GM23248 (cell line): ENCODE measurements at regions of chr10 and their contacts with region 1.

Region 1: GRCh38 chr10:125719146-125720001 is at the start of gene EDRF1:
- DNase-seq: peak; percentile 100
- H3K4me3 ChIP-seq: peak within 1 kb of the TSS; percentile 99
- H3K27ac ChIP-seq: peak within 1 kb of the TSS; percentile 87
- H3K4me1 ChIP-seq: peaks cover 16% of the 10 kb centered on the region
- H3K27me3 ChIP-seq: no peaks in the 10 kb centered on the region
- total RNA-seq, gene EDRF1: 13.2 and 16.4 TPM in 2 replicates

Region 2: GRCh38 chr10:125048101-125048864 is 671.1 kb before region 1 on chr10:
- in situ Hi-C with region 1: loop called (anchors 25 kb)
- DNase-seq: peak; percentile 89
- H3K4me3 ChIP-seq: no peak overlapping the region
- H3K27ac ChIP-seq: no peak overlapping the region
- H3K4me1 ChIP-seq: peaks cover 36% of the 10 kb centered on the region
- H3K27me3 ChIP-seq: no peaks in the 10 kb centered on the region

Region 3: GRCh38 chr10:125859128-125859817 is 139.9 kb after region 1 on chr10:
- in situ Hi-C with region 1: no loop called
- DNase-seq: no peak
- H3K4me3 ChIP-seq: no peak overlapping the region
- H3K27ac ChIP-seq: no peak overlapping the region
- H3K4me1 ChIP-seq: no peaks in the 10 kb centered on the region
- H3K27me3 ChIP-seq: no peaks in the 10 kb centered on the region

Region 4: DNA sequence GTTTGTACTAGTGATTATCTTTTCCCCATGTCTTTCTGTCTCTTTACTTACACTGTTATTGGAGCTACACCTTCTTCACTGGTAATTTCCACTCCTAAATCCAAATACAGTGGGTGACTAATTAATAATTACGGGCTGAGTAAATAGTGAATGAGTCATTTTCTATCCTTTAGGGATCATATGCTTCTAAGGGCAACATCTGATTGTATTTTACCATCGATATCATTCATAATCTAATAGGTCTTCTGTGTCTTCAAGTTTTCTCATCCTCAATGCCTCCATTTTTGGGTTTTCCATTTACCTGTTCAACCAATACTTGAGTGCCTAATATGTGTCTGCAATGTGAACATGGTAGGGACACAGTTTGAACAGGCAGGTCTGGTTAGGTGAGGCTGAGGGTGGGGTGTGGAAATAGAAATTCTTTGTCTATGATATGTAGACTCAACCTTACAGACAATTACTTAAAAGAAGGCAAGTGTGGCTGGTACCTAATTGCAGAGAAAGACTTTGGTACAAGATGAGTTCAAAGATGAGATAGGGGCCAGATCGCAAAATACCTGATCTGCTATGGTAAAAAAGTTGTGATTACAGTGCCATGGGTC is 167.6 kb after region 1 on chr10:
- in situ Hi-C with region 1: no loop called
- DNase-seq: peak; percentile 32
- H3K4me3 ChIP-seq: no peak overlapping the region
- H3K27ac ChIP-seq: no peak overlapping the region
- H3K4me1 ChIP-seq: peaks cover 8% of the 10 kb centered on the region; the same call in 1 of the 2 replicates
- H3K27me3 ChIP-seq: no peaks in the 10 kb centered on the region